ENCODE measurements at regions of chr14 and their contacts with region 1.

Region 1: DNA sequence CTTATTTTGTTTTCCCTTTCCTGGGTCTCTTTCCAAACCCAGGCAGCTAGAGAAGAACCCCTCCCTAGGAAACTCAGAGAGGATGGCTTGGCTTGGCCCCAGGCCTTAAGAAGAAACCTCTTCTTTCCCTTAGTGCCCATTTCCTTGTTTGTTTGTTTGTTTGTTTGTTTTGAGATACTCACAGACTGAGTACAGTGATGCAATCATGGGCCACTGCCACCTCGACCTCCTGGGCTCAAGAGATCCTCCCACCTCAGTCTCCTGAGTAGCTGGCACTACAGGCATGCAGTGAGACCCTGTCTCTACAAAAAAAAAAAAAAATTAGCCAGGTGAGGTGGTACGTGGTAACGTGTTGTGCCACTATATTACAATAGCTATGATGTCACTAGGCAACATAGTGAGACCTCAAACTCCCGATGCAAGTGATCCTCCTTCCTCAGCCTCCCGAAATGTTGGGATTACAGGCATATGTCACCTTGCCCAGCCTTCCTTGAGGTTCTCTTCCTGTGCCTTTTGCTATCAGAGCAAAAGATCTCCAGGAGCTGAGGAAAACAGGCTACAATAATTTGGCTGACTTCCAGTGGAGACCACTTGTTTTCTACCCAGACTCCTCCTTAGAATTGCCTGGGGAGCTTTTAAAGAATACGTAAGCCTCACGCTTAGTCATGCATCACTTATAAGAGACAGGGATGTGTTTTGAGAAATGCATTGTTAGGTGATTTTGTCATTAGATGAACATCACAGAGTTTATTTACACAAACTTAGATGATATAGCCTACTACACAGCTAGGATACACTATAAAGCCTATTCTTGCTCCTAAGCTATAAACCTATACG is 34.5 kb upstream of the LGALS3 start:
- DNase-seq: no peak
- H3K4me3 ChIP-seq: no peak overlapping the region
- H3K27ac ChIP-seq: no peak overlapping the region
- H3K4me1 ChIP-seq: no peaks in the 10 kb centered on the region
- H3K27me3 ChIP-seq: no peaks in the 10 kb centered on the region
- CTCF ChIP-seq: no peak

Region 2: DNA sequence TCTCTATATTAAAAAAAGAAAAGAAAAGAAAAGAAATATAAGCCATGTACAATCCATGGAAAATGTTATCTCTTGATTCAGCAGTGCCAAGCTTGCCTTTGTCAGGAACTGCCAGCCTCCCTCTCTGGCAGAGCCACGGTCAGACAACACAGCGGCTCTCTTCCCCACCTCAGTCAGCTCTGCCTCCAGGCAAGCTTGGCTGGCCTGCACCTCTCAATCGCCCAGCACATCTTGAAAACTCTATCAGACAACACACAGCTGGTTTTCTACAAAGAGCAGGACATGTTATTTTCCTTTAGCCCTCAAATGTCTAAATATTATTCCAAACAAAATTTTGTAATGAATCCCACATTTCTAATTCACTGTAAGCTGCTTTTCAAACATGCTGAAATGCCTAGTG is 171.9 kb before region 1 on chr14:
- intact Hi-C with region 1: no loop called
- DNase-seq: no peak
- H3K4me3 ChIP-seq: no peak overlapping the region
- H3K27ac ChIP-seq: no peak overlapping the region
- H3K4me1 ChIP-seq: no peaks in the 10 kb centered on the region
- H3K27me3 ChIP-seq: no peaks in the 10 kb centered on the region
- CTCF ChIP-seq: no peak

Region 3: GRCh38 chr14:55160989-55161388 is 66.5 kb after region 1 on chr14:
- intact Hi-C with region 1: loop called (anchors 1 kb)
- DNase-seq: no peak
- H3K4me3 ChIP-seq: no peak overlapping the region
- H3K27ac ChIP-seq: no peak overlapping the region
- H3K4me1 ChIP-seq: no peaks in the 10 kb centered on the region
- H3K27me3 ChIP-seq: no peaks in the 10 kb centered on the region
- CTCF ChIP-seq: peak; percentile 53 to 66 (median 61)

Measured in ascending aorta (tissue), 2 donors.